ENCODE measurements at regions of chr19 and their contacts with region 1.

Region 1: GRCh38 chr19:1241417-1242095 is at the start of gene ATP5F1D:
- DNase-seq: peak; percentile 95
- ATAC-seq: peak; percentile 43
- H3K4me3 Mint-ChIP-seq: peak within 1 kb of the TSS; percentile 86
- H3K27ac Mint-ChIP-seq: peak within 1 kb of the TSS; percentile 87
- H3K4me1 Mint-ChIP-seq: peaks cover 26% of the 10 kb centered on the region
- H3K27me3 Mint-ChIP-seq: peaks cover 4% of the 10 kb centered on the region; the same call in 1 of the 2 replicates
- CTCF ChIP-seq: no peak
- total RNA-seq, gene ATP5F1D: 262 to 277 TPM (median 270 TPM) in 3 replicates

Region 2: DNA sequence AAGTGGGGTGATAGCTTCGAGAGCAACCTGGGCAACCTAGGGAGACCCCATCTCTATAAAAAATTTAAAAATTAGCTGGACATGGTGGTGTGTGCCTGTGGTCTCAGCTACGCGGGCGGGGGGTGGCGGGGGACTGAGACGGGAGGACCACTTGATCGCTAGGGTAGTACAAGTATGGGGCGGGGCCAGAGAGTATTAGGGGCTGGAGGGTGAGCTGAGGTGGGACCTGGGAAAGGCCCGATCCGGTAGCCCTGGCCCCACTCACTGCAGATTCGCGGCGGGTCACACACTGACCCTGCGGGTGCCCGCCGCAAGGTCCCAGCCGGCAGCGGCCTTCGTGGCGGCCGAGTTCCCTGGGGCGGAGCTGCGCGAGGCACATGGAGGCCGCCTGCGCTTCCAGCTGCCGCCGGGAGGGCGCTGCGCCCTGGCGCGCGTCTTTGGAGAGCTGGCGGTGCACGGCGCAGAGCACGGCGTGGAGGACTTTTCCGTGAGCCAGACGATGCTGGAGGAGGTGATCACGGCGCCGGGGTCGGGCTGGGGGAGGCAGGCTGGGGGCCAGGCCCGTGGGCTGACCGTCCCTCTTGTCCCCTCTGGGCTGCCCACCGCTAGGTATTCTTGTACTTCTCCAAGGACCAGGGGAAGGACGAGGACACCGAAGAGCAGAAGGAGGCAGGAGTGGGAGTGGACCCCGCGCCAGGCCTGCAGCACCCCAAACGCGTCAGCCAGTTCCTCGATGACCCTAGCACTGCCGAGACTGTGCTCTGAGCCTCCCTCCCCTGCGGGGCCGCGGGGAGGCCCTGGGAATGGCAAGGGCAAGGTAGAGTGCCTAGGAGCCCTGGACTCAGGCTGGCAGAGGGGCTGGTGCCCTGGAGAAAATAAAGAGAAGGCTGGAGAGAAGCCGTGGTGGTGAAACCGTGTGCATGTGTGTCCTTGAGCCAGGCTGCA is 176.6 kb before region 1 on chr19:
- CTCF ChIA-PET with region 1: interaction called, 19 read pairs
- POLR2A ChIA-PET with region 1: no interaction called
- DNase-seq: peak; percentile 80
- ATAC-seq: peak; percentile 61
- H3K4me3 Mint-ChIP-seq: peak overlapping the region; percentile 65
- H3K27ac Mint-ChIP-seq: no peak overlapping the region; the same call in 1 of the 2 replicates
- H3K4me1 Mint-ChIP-seq: peaks cover 17% of the 10 kb centered on the region
- H3K27me3 Mint-ChIP-seq: peaks cover 26% of the 10 kb centered on the region
- CTCF ChIP-seq: peak; percentile 55

Region 3: GRCh38 chr19:1082172-1082927 is 159.2 kb before region 1 on chr19:
- CTCF ChIA-PET with region 1: interaction called, 23 read pairs
- POLR2A ChIA-PET with region 1: no interaction called
- DNase-seq: peak; percentile 99
- ATAC-seq: peak; percentile 83
- H3K4me3 Mint-ChIP-seq: peak overlapping the region; percentile 67
- H3K27ac Mint-ChIP-seq: peak overlapping the region; percentile 90
- H3K4me1 Mint-ChIP-seq: no peaks in the 10 kb centered on the region; the same call in 1 of the 2 replicates
- H3K27me3 Mint-ChIP-seq: no peaks in the 10 kb centered on the region
- CTCF ChIP-seq: no peak

Region 4: DNA sequence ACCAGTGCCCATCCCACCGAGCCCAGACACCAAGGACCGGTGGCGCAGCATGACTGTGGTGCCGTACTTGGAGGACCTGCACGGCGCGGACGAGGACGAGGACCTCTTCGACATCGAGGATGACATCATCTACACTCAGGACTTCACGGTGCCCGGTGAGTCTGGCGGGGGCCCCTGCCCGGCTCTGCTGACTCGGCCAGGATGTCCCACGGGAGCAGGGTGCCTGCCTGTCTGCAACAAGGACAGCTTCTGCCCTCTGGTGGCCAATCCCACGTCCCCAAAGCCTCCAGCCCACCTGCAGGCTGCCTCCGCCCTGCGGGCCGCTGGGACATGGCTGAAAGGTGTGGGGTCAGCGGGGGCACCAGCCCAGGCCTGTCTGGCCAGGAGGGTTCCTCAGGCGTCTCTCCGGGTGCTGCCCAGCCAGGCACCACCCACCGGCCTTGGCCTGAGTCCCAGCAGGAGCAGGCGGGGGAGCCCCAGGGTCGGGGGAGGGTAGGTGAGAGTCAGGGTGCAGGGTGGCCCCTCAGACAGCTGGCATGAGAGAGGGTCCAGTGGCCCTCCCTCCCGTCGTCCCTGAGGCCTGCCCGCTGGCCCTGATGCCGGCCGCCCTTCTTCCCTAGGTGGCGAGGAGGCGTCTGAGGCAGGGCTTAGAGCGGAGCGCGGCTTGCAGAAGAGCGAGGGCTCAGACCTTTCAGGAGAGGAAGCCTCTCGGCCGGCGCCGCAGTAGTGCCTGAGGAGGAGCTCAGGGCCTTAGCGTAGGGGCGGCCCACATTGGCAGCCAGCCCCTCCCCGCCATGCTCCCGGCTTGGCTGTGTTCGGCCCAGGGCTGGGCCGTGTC is 18.3 kb before region 1 on chr19:
- CTCF ChIA-PET with region 1: interaction called, 26 read pairs
- POLR2A ChIA-PET with region 1: no interaction called
- DNase-seq: peak; percentile 78
- ATAC-seq: peak; percentile 51
- H3K4me3 Mint-ChIP-seq: no peak overlapping the region
- H3K27ac Mint-ChIP-seq: peak overlapping the region; percentile 32; the same call in 1 of the 2 replicates
- H3K4me1 Mint-ChIP-seq: peaks cover under 1% of the 10 kb centered on the region
- H3K27me3 Mint-ChIP-seq: no peaks in the 10 kb centered on the region
- CTCF ChIP-seq: no peak; the same call in 1 of the 2 replicates

Region 5: DNA sequence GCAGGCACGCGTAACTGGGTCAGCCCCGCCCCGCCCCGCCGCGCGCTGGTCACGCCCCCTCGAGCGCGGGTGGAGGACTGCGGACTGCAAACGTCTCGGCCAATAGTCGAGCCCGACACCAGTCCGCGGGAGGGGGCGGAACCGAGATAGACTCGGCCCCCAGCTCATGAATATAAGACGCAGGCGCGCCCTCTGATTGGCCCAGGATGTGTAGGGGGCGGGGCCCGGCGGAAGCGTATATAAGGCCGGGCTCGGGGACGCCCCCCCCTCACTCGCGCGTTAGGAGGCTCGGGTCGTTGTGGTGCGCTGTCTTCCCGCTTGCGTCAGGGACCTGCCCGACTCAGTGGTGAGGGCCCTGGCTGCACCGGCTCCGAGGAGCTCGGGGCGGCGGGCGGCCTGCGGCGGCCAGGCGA is 27.5 kb after region 1 on chr19 and contains the start of gene CIRBP:
- CTCF ChIA-PET with region 1: interaction called, 648 read pairs
- POLR2A ChIA-PET with region 1: interaction called, 37 read pairs
- DNase-seq: peak; percentile 100
- ATAC-seq: peak; percentile 74
- H3K4me3 Mint-ChIP-seq: peak within 1 kb of the TSS; percentile 79
- H3K27ac Mint-ChIP-seq: peak within 1 kb of the TSS; percentile 97
- H3K4me1 Mint-ChIP-seq: peaks cover 60% of the 10 kb centered on the region
- H3K27me3 Mint-ChIP-seq: peaks cover 7% of the 10 kb centered on the region
- CTCF ChIP-seq: no peak
- total RNA-seq, gene CIRBP: 256 to 298 TPM (median 256 TPM) in 3 replicates

Region 6: GRCh38 chr19:1285737-1286360 is 44.3 kb after region 1 on chr19 and contains the start of gene EFNA2:
- CTCF ChIA-PET with region 1: interaction called, 15 read pairs
- POLR2A ChIA-PET with region 1: no interaction called
- DNase-seq: no peak
- ATAC-seq: peak; percentile 14
- H3K4me3 Mint-ChIP-seq: peak within 1 kb of the TSS; percentile 74
- H3K27ac Mint-ChIP-seq: peak within 1 kb of the TSS; percentile 45; the same call in 1 of the 2 replicates
- H3K4me1 Mint-ChIP-seq: peaks cover 13% of the 10 kb centered on the region
- H3K27me3 Mint-ChIP-seq: peaks cover 19% of the 10 kb centered on the region
- CTCF ChIP-seq: no peak
- total RNA-seq, gene EFNA2: 11.4 to 14.2 TPM (median 12.6 TPM) in 3 replicates

Region 7: DNA sequence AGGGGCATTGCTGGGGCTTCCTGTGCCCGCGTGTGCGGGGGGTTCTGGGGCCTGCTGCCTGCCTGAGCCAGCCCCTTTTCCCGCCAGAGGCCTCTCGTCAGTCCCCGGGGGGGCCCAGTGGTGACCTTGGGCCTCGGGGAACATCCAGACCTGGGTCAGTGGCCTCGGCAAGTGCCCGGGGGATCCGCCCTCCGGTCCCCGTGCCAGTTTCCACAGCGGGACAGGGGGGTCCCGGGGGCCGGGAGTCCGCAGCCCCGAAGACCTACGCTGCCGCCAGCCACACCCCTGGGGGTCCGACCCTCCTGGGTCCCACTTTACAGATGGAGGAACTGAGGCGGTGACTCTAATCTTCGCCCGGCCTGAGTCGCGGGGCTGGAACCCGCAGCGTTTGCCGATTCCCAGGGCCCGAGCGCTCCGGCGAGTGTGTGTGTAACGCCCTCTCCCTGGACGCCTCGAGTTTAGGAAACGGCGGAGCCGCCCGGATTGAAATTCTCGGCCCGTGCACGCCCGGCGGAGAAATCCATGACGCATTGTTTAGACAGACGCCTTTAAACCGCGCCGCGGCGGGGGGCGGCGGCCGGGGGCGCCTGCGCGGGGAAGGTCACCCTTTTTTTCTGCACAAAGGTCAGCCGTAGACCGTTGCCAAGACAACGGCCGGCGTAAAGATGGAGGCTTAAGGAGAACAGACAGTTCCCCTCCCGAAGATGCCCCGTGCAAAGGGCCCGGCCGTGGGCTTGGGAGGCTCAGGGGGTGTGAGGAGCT is 83.4 kb after region 1 on chr19:
- CTCF ChIA-PET with region 1: no interaction called
- POLR2A ChIA-PET with region 1: no interaction called
- DNase-seq: peak; percentile 64
- ATAC-seq: peak; percentile 43
- H3K4me3 Mint-ChIP-seq: peak overlapping the region; percentile 62
- H3K27ac Mint-ChIP-seq: no peak overlapping the region
- H3K4me1 Mint-ChIP-seq: no peaks in the 10 kb centered on the region
- H3K27me3 Mint-ChIP-seq: peaks cover 4% of the 10 kb centered on the region; the same call in 1 of the 2 replicates
- CTCF ChIP-seq: no peak